Lower leg skin (tissue), 4 donors: ENCODE measurements at regions of chr16 and their contacts with region 1.

Region 1: GRCh38 chr16:84511180-84511824 is 6.8 kb upstream of the MEAK7 start:
- DNase-seq: peak; percentile 82 to 98
- H3K4me3 ChIP-seq: no peak overlapping the region
- CTCF ChIP-seq: peak in 1 of 3 donors; percentile 93
- POLR2A ChIP-seq: no peak

Region 2: GRCh38 chr16:83813823-83814658 is 697.3 kb before region 1 on chr16:
- intact Hi-C with region 1: no loop called
- DNase-seq: peak; percentile 43 to 82
- H3K4me3 ChIP-seq: no peak overlapping the region
- CTCF ChIP-seq: no peak
- POLR2A ChIP-seq: no peak

Region 3: GRCh38 chr16:84617791-84618580 is 106.7 kb after region 1 on chr16 and contains the start of gene COTL1:
- intact Hi-C with region 1: loop called (anchors 5 kb)
- DNase-seq: peak; percentile 95 to 99
- H3K4me3 ChIP-seq: peak within 1 kb of the TSS; percentile 44
- CTCF ChIP-seq: no peak
- POLR2A ChIP-seq: no peak
- total RNA-seq, gene COTL1: 6.5 to 25.7 (median 9.8) TPM

Region 4: DNA sequence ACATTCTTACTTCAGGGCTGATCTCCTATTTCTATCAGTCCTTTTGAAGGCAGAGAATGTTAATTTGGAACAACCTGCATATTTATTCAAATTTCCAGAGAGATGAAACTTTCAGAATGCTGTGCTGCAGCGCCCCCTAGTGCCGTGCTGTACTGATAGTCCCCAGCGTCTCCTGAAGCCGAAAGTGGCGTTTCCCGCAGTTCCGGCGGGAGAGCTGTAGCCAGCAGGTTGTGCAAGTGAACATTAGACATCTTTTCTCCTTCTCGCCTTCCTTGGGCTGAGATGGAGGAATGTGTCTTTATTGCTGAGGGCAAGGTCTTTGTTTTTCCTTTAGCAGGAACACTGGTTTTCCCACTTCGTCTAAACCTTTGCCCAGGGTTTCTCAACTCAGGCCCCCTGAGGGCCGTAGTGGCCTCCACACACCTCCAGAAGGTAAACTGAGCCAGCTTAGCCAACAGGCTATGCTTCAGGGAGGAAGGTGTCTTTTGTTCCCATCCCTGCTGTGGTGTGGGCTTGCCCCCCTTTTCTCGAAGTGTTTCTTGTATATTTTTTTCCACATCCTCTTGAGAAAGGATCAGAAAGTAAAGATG is 214.9 kb after region 1 on chr16:
- intact Hi-C with region 1: loop called (anchors 5 kb)
- DNase-seq: peak; percentile 89 to 98
- H3K4me3 ChIP-seq: no peak overlapping the region
- CTCF ChIP-seq: peak in 1 of 3 donors; percentile 97
- POLR2A ChIP-seq: no peak

Region 5: GRCh38 chr16:84967828-84968227 is 456.5 kb after region 1 on chr16:
- intact Hi-C with region 1: loop called (anchors 10 kb)
- DNase-seq: no peak
- H3K4me3 ChIP-seq: no peak overlapping the region
- CTCF ChIP-seq: no peak
- POLR2A ChIP-seq: no peak